ENCODE measurements at regions of chr9 and their contacts with region 1.

Region 1: GRCh38 chr9:124164811-124165210 is 92.9 kb upstream of the NEK6 start:
- DNase-seq: peak in 3 of 10 donors; percentile 15 to 19 (median 18)

Region 2: DNA sequence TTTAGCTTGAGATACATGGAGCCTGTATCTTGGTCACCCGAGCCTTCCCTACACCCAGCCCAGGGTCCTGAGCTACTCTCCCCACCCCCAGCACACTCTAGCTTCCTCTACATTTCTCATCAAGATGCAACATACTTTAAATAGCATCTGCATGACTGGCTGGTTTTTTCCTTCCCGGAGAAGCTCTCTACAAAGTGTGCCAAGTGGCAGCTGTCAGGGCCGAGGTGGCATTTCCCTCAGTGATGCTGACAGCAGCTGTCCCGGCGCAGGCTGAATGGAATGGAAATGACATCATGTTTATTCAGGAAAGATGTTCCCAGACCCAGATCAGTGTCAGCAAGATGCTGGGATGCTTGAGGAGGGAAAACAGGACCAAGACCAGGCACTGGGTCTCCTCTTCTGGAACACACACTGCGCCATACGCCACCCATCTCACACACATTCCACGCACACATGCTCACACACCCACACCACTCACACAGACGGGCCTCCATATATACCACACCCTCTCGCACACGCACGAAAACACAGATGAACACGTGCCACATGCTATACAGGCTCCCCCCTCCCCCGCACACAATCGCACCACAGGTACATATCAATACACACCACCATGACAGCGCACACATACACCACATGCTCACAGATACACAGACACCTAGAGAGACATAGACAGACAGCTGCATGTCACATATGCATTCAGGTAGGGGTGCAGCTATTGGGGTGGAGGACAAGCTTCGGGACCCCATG is 85.5 kb before region 1 on chr9:
- intact Hi-C with region 1: loop called (anchors 5 kb)
- DNase-seq: peak in 9 of 10 donors; percentile 32 to 96 (median 70)

Measured in posterior cingulate gyrus (tissue), 11 donors.